ENCODE measurements at regions of chr9 and their contacts with region 1.

Region 1: DNA sequence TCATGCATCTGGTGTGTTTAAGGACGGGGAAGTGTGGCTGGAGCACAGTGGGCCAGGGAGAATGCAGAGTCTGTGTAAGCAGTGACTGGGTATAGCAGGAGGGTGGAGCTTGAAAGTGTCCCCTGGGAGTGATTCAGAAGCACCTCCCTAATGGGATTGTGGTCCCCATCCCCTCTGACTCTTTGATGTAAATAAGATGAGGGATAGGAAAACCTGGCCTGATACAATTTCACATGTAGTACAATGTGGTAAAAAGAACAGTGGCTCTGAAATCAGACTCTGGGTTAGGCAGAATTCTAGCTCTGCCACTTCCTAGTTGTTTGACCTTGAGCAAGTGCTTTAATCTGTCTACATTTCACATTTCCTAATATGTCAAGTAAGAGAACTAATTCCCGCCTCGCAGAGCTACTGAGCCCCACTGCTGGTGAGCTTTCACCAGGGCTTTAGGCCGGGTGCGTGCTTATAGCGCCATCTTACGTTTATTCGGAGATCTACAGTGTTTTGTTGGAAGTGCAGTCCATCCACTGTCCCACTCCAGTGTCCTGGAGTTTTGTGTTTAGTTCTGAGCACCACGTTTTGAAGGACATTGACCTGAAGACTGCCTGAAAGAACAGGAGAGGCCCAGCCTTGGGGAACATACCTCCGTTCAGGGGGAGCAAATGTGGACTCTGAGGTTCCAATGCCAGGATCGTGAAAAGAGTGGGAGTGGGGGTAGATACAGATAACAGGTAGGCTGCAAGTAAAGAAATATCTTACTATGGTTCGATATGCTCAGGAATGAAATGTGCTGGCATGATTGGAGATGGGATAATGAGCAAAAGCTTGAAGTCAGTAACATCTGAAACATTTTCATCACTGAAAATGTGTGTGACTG is 51.2 kb upstream of the TESK1 start:
- DNase-seq: peak; percentile 73
- ATAC-seq: peak; percentile 91
- H3K4me3 ChIP-seq: no peak overlapping the region
- H3K27ac ChIP-seq: no peak overlapping the region
- H3K4me1 ChIP-seq: peaks cover 10% of the 10 kb centered on the region
- H3K27me3 ChIP-seq: no peaks in the 10 kb centered on the region
- CTCF ChIP-seq: peak; percentile 98
- POLR2A ChIP-seq: peak; percentile 59; the same call in 1 of the 2 replicates
- RAD21 ChIP-seq: peak; percentile 99

Region 2: GRCh38 chr9:35116898-35117551 is 436.9 kb before region 1 on chr9:
- CTCF ChIA-PET with region 1: interaction called, 5 read pairs
- POLR2A ChIA-PET with region 1: no interaction called
- dilution Hi-C with region 1: no loop called
- in situ Hi-C with region 1: loop called (anchors 5 kb)
- intact Hi-C with region 1: loop called (anchors 1 kb)
- DNase-seq: peak; percentile 90
- ATAC-seq: peak; percentile 50
- H3K4me3 ChIP-seq: peak overlapping the region; percentile 88
- H3K27ac ChIP-seq: no peak overlapping the region
- H3K4me1 ChIP-seq: peaks cover 14% of the 10 kb centered on the region
- H3K27me3 ChIP-seq: peaks cover 3% of the 10 kb centered on the region
- CTCF ChIP-seq: peak; percentile 97
- POLR2A ChIP-seq: 0 out of 2 replicates have a peak, but pooled peaks have one; percentile 48
- RAD21 ChIP-seq: peak; percentile 95

Region 3: DNA sequence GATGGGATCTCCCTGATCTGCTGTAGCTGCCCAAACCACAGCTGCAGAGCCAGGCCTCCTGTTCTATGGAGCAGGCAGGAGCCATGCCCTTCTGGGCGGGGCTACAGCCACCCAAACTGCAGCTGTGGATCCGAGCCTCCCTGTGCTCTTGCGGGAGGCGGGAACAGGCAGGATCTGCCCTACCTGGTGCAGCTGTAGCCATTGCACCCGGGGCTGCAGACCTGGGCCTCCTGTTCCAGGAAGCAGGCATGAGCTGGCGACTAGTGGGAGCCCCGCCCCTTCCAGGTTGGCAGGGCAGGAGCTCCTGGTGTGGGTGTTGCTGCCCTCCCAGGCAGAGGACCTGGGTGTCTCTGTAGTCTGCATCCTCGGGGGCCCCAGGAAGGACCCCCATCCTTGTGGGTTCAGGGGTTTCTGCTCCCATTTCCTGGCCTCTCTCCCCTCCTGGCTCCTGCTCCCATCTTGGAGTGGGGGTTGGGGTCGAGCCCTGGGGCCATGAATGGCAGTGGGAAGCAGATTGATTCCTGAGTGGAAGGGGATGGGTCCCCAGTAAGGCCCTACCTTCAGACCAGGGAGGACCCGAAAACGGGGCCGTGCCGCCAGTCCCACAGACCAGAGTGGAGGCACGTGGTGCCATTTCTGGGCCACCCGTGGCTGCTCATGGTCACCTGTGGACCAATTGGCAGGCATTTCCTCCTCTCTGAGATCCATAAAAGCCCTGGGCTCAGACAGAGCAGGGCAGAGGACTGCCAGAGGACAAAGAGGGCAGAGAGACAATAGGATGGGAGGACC is 415.0 kb before region 1 on chr9:
- CTCF ChIA-PET with region 1: no interaction called
- POLR2A ChIA-PET with region 1: no interaction called
- dilution Hi-C with region 1: no loop called
- in situ Hi-C with region 1: no loop called
- intact Hi-C with region 1: no loop called
- DNase-seq: no peak
- ATAC-seq: no peak
- H3K4me3 ChIP-seq: no peak overlapping the region
- H3K27ac ChIP-seq: no peak overlapping the region
- H3K4me1 ChIP-seq: no peaks in the 10 kb centered on the region
- H3K27me3 ChIP-seq: peaks cover 2% of the 10 kb centered on the region; the same call in 1 of the 2 replicates
- CTCF ChIP-seq: no peak
- POLR2A ChIP-seq: no peak
- RAD21 ChIP-seq: no peak

Region 4: GRCh38 chr9:35481347-35481975 is 72.4 kb before region 1 on chr9:
- CTCF ChIA-PET with region 1: interaction called, 5 read pairs
- POLR2A ChIA-PET with region 1: no interaction called
- dilution Hi-C with region 1: no loop called
- in situ Hi-C with region 1: no loop called
- intact Hi-C with region 1: loop called (anchors 1 kb)
- DNase-seq: peak; percentile 75
- ATAC-seq: peak; percentile 78
- H3K4me3 ChIP-seq: no peak overlapping the region
- H3K27ac ChIP-seq: no peak overlapping the region
- H3K4me1 ChIP-seq: peaks cover 4% of the 10 kb centered on the region; the same call in 1 of the 2 replicates
- H3K27me3 ChIP-seq: peaks cover 3% of the 10 kb centered on the region; the same call in 1 of the 2 replicates
- CTCF ChIP-seq: peak; percentile 89
- POLR2A ChIP-seq: no peak
- RAD21 ChIP-seq: peak; percentile 89

Region 5: DNA sequence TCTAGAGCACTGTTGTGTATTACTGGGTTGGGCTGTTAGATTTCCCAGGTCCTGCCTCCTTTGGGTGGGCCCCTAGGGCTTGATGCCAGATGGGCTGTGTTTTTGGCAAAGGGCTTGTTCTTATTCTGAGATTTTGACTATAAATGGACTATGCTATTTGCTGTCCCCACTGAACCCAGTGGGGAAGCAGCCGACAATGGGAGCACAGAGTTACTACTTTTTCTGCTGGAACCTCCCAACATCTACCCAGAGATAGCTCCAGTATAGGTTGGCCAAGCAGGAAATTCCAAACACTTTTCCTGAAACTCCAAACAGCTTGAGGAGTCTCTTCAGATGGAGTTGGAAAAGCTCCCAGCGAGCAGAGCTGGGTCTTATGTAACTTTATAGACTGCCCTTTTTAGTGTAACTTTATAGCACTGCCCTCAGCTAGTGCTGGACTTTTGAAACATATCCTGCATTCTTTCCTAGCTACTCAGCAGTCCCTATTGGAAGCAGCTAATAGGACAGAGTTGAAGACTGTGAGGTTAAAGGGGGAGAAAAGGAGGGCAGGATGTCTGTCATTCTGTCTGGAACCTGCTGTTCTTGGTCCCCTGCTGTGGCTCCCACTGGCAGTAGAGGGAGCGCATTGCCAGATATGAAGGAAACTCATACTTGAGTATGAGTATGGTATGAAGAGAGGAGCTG is 43.0 kb before region 1 on chr9:
- CTCF ChIA-PET with region 1: interaction called, 11 read pairs
- POLR2A ChIA-PET with region 1: no interaction called
- dilution Hi-C with region 1: no loop called
- in situ Hi-C with region 1: no loop called
- intact Hi-C with region 1: loop called (anchors 1 kb)
- DNase-seq: peak; percentile 96
- ATAC-seq: peak; percentile 95
- H3K4me3 ChIP-seq: no peak overlapping the region
- H3K27ac ChIP-seq: peak overlapping the region; percentile 89
- H3K4me1 ChIP-seq: peaks cover 13% of the 10 kb centered on the region; the same call in 1 of the 2 replicates
- H3K27me3 ChIP-seq: no peaks in the 10 kb centered on the region
- CTCF ChIP-seq: peak; percentile 40
- POLR2A ChIP-seq: no peak
- RAD21 ChIP-seq: peak; percentile 35

Region 6: GRCh38 chr9:35526087-35526801 is 27.7 kb before region 1 on chr9:
- CTCF ChIA-PET with region 1: interaction called, 5 read pairs
- POLR2A ChIA-PET with region 1: no interaction called
- dilution Hi-C with region 1: no loop called
- in situ Hi-C with region 1: no loop called
- intact Hi-C with region 1: loop called (anchors 1 kb)
- DNase-seq: peak; percentile 64
- ATAC-seq: peak; percentile 52
- H3K4me3 ChIP-seq: no peak overlapping the region
- H3K27ac ChIP-seq: peak overlapping the region; percentile 63; the same call in 1 of the 2 replicates
- H3K4me1 ChIP-seq: peaks cover 27% of the 10 kb centered on the region
- H3K27me3 ChIP-seq: no peaks in the 10 kb centered on the region
- CTCF ChIP-seq: no peak
- POLR2A ChIP-seq: no peak
- RAD21 ChIP-seq: no peak

Measured in IMR-90 (cell line).